HepG2 (cell line): ENCODE measurements at regions of chr7 and their contacts with region 1.

Region 1: DNA sequence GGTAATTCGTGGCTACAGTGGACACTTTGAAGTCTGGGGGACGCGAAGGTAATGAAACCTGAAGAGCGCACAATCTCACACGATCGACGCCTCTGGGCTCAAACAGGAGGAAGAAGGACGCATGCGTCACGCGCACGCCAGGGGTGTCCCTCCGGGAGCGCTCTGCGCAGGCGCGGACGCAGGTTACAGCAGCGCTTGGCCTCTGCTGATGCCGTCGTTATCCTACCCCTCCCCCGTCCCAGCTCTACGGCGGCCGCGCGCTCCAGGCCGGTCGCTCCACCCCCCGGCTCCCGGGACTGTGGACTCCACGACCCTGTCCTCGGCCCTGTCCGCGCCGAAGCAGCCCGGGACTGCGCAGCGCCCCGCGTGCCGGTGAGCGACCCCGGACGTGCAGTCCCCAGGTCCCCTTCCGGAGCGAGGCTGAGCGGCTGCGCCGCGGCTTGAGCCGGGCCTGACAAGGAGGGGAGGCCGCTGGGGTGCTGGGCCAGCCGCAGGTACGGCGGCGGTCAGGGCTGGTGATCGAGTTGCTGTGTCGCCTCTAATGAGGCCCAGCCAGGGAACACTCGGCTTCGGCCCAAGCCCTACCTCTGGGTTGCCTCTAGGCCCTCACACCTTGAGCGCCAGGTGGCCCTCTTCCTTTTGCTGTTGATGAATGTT is at the start of gene TMEM106B:
- DNase-seq: peak; percentile 92
- ATAC-seq: peak; percentile 97
- H3K4me3 ChIP-seq: peak within 1 kb of the TSS; percentile 66 to 77 (median 68)
- H3K27ac ChIP-seq: peak within 1 kb of the TSS; percentile 97
- H3K4me1 ChIP-seq: peaks cover 24% of the 10 kb centered on the region
- H3K27me3 ChIP-seq: no peaks in the 10 kb centered on the region; a peak in 1 of 5 replicates
- CTCF ChIP-seq: peak; percentile 65
- EP300 ChIP-seq: peak in 1 of 2 experiments; percentile 32; a peak in 2 of 4 replicates
- POLR2A ChIP-seq: peak; percentile 84 to 87
- RAD21 ChIP-seq: peak; percentile 62; the same call in 1 of the 2 replicates
- total RNA-seq, gene TMEM106B: 23.4 and 25.1 TPM in 2 replicates

Region 2: DNA sequence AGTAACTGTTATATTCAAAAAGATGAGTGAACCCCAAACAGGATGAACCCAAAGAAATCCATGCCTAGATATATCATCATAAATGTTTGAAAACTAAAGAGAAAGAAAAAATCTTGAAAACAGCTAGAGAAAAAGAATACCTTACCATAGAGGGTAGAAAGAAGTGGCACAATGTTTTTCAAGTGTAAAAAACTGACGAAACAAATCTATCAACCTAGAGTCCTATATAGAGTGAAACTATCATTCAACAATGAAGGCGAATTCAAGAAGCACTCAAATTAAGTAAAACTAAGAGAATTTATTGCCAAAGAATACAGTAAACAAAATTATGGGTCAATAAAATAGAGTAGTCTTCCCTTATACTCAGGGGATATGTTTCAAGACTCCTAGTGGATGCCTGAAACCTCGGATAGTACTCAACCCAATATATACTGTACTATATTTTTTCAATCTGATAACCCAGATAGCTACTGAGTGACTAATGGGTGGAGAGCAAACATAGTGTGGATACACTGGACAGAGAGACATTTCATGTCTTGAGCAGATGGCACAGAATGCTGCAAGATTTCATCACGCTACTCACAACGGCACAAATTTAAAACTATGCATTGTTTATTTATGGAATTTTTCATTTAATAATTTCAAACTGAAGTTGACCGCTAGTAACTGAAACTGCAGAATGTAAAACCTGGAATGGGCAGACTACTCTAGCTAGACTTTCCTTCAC is 52.7 kb before region 1 on chr7:
- CTCF ChIA-PET with region 1: no interaction called
- POLR2A ChIA-PET with region 1: no interaction called
- in situ Hi-C with region 1: no loop called
- intact Hi-C with region 1: loop called (anchors 5 kb)
- DNase-seq: peak; percentile 3
- ATAC-seq: peak; percentile 71
- H3K4me3 ChIP-seq: no peak overlapping the region
- H3K27ac ChIP-seq: no peak overlapping the region
- H3K4me1 ChIP-seq: no peaks in the 10 kb centered on the region
- H3K27me3 ChIP-seq: no peaks in the 10 kb centered on the region
- CTCF ChIP-seq: no peak
- EP300 ChIP-seq: no peak
- POLR2A ChIP-seq: no peak
- RAD21 ChIP-seq: no peak

Region 3: GRCh38 chr7:12199363-12199762 is 11.8 kb before region 1 on chr7:
- CTCF ChIA-PET with region 1: interaction called, 3 read pairs
- POLR2A ChIA-PET with region 1: interaction called, 29 read pairs
- in situ Hi-C with region 1: no loop called
- intact Hi-C with region 1: loop called (anchors 1 kb)
- DNase-seq: peak; percentile 88
- ATAC-seq: peak; percentile 94
- H3K4me3 ChIP-seq: no peak overlapping the region; a peak in 1 of 6 replicates
- H3K27ac ChIP-seq: peak overlapping the region; percentile 45
- H3K4me1 ChIP-seq: peaks cover 27% of the 10 kb centered on the region
- H3K27me3 ChIP-seq: no peaks in the 10 kb centered on the region
- CTCF ChIP-seq: no peak
- EP300 ChIP-seq: peak in 1 of 2 experiments; percentile 85; a peak in 2 of 4 replicates
- POLR2A ChIP-seq: no peak
- RAD21 ChIP-seq: no peak

Region 4: DNA sequence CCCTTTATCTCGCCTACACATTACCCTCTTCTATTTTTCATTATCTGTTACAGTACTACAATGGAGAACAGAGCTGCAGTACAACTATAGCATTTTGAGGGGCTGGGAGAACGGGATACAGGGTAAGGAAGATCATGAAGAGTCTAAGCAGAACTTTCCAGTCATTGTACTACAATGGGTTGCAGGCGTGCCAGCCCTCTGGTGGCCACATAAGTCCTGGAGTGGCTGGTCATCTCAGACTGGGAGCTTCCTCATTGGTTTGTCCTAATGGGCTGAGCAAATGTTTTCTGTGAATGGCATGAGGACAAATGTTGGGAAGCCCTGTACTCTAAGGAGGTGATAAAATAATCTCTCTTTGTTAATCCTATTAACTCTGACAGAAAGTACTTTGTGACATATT is 32.9 kb after region 1 on chr7:
- CTCF ChIA-PET with region 1: interaction called, 5 read pairs
- POLR2A ChIA-PET with region 1: interaction called, 3 read pairs
- in situ Hi-C with region 1: no loop called
- intact Hi-C with region 1: loop called (anchors 2 kb)
- DNase-seq: peak; percentile 43
- ATAC-seq: peak; percentile 100
- H3K4me3 ChIP-seq: no peak overlapping the region
- H3K27ac ChIP-seq: no peak overlapping the region
- H3K4me1 ChIP-seq: no peaks in the 10 kb centered on the region
- H3K27me3 ChIP-seq: no peaks in the 10 kb centered on the region
- CTCF ChIP-seq: peak; percentile 74
- EP300 ChIP-seq: no peak
- POLR2A ChIP-seq: no peak
- RAD21 ChIP-seq: peak; percentile 64

Region 5: DNA sequence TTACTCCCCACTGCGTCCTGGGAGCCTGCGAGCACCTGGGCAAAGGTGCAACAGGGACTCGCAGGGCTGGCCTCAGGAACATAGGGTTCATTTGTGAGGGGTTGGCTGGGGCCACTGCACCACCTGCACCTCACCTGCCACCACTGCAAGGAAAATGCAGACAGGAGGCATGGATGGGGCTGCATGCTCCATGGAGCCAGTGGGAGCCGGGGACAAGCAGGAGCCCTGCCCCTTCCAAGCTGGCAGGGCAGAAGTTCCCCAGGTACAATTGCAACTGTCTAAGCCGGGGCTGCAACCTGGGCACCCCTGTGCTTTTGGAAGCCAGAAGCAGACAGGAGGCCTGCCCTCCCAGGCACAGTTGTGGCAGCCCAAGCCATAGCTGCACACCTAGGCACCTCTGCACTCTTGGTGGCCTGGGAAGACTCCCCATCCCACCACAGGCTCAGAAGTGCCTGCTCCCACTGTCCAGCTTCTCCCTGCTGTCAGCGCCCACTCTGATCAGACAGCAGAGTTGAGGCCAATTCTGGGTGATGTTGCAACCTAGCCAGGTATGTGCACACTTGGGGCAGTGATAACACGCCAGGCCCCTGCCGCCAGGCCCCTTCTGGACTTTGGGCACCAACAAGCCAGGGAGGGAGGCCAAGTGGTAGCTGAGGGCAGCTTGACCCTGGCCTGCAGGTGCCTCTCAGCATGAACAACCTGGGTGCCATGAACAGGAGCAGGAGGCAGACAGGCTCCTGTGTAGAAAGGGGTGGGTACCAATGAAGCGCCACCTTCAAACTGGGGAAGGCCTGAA is 58.1 kb after region 1 on chr7:
- CTCF ChIA-PET with region 1: no interaction called
- POLR2A ChIA-PET with region 1: interaction called, 5 read pairs
- in situ Hi-C with region 1: no loop called
- intact Hi-C with region 1: loop called (anchors 5 kb)
- DNase-seq: peak; percentile 53
- ATAC-seq: peak; percentile 97
- H3K4me3 ChIP-seq: no peak overlapping the region; a peak in 1 of 6 replicates
- H3K27ac ChIP-seq: no peak overlapping the region
- H3K4me1 ChIP-seq: peaks cover 14% of the 10 kb centered on the region
- H3K27me3 ChIP-seq: no peaks in the 10 kb centered on the region
- CTCF ChIP-seq: 0 out of 2 replicates have a peak, but pooled peaks have one; percentile 15
- EP300 ChIP-seq: peak; percentile 48 to 64; a peak in 2 of 4 replicates
- POLR2A ChIP-seq: no peak
- RAD21 ChIP-seq: no peak

Region 6: GRCh38 chr7:12291870-12292269 is 80.7 kb after region 1 on chr7:
- CTCF ChIA-PET with region 1: no interaction called
- POLR2A ChIA-PET with region 1: no interaction called
- in situ Hi-C with region 1: no loop called
- intact Hi-C with region 1: no loop called
- DNase-seq: peak; percentile 6
- ATAC-seq: peak; percentile 47; the same call in 2 of the 3 replicates
- H3K4me3 ChIP-seq: no peak overlapping the region
- H3K27ac ChIP-seq: no peak overlapping the region
- H3K4me1 ChIP-seq: no peaks in the 10 kb centered on the region
- H3K27me3 ChIP-seq: no peaks in the 10 kb centered on the region
- CTCF ChIP-seq: peak; percentile 35; the same call in 1 of the 2 replicates
- EP300 ChIP-seq: no peak
- POLR2A ChIP-seq: no peak
- RAD21 ChIP-seq: no peak

Region 7: GRCh38 chr7:13144673-13145072 is 933.5 kb after region 1 on chr7:
- CTCF ChIA-PET with region 1: no interaction called
- POLR2A ChIA-PET with region 1: no interaction called
- in situ Hi-C with region 1: no loop called
- intact Hi-C with region 1: no loop called
- DNase-seq: no peak
- ATAC-seq: no peak
- H3K4me3 ChIP-seq: no peak overlapping the region
- H3K27ac ChIP-seq: no peak overlapping the region
- H3K4me1 ChIP-seq: no peaks in the 10 kb centered on the region
- H3K27me3 ChIP-seq: no peaks in the 10 kb centered on the region
- CTCF ChIP-seq: no peak
- EP300 ChIP-seq: no peak
- POLR2A ChIP-seq: no peak
- RAD21 ChIP-seq: no peak